Activated T-helper 2 cell treated with anti-CD3 and anti-CD28 coated beads, Interferon-gamma antibody, Interleukin-2, Interleukin-4, amounts not matched to agents 10 μg/mL and 5 μg/mL and 100 μg/mL, durations not matched to agents 14 hours and 24 hours and 36 hours (primary cell): ENCODE measurements at regions of chr5 and their contacts with region 1.

Region 1: GRCh38 chr5:59799668-59800346 is 93.7 kb downstream of the PDE4D start:
- DNase-seq: no peak
- H3K4me3 Mint-ChIP-seq: no peak overlapping the region
- H3K27ac Mint-ChIP-seq: no peak overlapping the region
- H3K4me1 Mint-ChIP-seq: peaks cover 4% of the 10 kb centered on the region
- H3K27me3 Mint-ChIP-seq: peaks cover 10% of the 10 kb centered on the region

Region 2: GRCh38 chr5:59390074-59390659 is 409.6 kb before region 1 on chr5:
- intact Hi-C with region 1: loop called (anchors 1 kb)
- DNase-seq: no peak
- H3K4me3 Mint-ChIP-seq: no peak overlapping the region
- H3K27ac Mint-ChIP-seq: no peak overlapping the region
- H3K4me1 Mint-ChIP-seq: no peaks in the 10 kb centered on the region
- H3K27me3 Mint-ChIP-seq: peaks cover 15% of the 10 kb centered on the region

Region 3: GRCh38 chr5:59483971-59484472 is 315.8 kb before region 1 on chr5:
- intact Hi-C with region 1: loop called (anchors 5 kb)
- DNase-seq: no peak
- H3K4me3 Mint-ChIP-seq: peak overlapping the region; percentile 13
- H3K27ac Mint-ChIP-seq: peak overlapping the region; percentile 79
- H3K4me1 Mint-ChIP-seq: peaks cover 20% of the 10 kb centered on the region
- H3K27me3 Mint-ChIP-seq: peaks cover 4% of the 10 kb centered on the region

Region 4: DNA sequence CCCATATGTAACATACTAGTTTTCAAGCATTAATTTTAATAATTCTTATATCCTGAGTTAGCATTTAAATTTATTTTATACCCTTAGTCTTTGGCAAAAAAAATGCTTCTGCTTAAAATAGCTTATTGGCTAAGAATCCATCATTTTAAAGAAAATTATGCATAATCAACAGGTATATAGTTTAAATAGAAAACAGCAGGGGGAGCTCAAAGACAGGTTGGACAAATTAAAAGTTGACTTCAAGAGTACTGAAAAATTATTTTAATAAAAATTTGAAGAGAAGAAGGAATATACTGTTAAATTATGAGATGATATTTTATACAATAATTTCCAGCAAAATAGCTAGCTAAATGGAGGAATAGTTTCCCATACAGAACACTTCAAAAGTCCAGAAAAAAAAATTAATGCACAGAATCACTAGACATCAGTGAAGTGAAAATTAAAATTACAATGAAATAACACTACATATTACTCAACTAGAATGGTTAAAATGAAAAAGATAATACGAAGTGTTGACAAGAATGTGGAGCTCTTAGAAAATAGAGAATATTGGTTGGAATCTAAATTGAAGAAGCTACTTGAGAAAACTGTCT is 293.4 kb before region 1 on chr5:
- intact Hi-C with region 1: loop called (anchors 1 kb)
- DNase-seq: no peak
- H3K4me3 Mint-ChIP-seq: no peak overlapping the region
- H3K27ac Mint-ChIP-seq: no peak overlapping the region
- H3K4me1 Mint-ChIP-seq: no peaks in the 10 kb centered on the region
- H3K27me3 Mint-ChIP-seq: peaks cover 5% of the 10 kb centered on the region

Region 5: DNA sequence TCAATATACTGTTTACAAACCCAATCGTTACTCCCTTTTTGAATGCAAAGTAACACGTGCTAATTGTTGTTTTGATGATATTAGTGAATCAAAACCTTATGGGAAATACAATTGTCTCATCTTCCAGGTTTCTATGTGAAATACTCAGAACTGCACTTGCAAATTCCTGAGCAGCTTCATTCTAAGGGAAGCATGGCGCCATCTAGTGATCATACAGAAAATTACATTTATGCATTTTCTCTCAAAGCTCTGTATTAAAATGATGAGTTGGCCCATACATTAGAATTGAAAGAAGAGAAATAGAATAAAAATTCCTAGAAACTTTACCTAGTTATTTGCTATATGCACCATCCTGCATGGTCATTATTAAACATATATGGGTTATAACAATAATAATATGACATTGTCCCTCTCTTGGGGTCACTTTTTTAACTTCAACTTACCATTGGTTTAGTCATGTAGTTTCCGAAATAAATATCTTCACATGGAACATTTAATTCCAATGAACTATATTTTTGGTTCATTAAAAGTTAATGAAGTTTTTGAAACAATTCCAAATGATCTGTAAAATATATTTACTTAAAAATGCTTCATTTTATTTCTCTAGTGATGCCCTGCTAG is 126.3 kb before region 1 on chr5:
- intact Hi-C with region 1: loop called (anchors 5 kb)
- DNase-seq: no peak
- H3K4me3 Mint-ChIP-seq: no peak overlapping the region
- H3K27ac Mint-ChIP-seq: no peak overlapping the region
- H3K4me1 Mint-ChIP-seq: no peaks in the 10 kb centered on the region
- H3K27me3 Mint-ChIP-seq: peaks cover 4% of the 10 kb centered on the region

Region 6: GRCh38 chr5:59724482-59725391 is 75.1 kb before region 1 on chr5:
- intact Hi-C with region 1: loop called (anchors 2 kb)
- DNase-seq: no peak
- H3K4me3 Mint-ChIP-seq: no peak overlapping the region
- H3K27ac Mint-ChIP-seq: no peak overlapping the region
- H3K4me1 Mint-ChIP-seq: no peaks in the 10 kb centered on the region
- H3K27me3 Mint-ChIP-seq: peaks cover 1% of the 10 kb centered on the region

Region 7: GRCh38 chr5:59760798-59761348 is 38.9 kb before region 1 on chr5:
- intact Hi-C with region 1: loop called (anchors 2 kb)
- DNase-seq: no peak
- H3K4me3 Mint-ChIP-seq: no peak overlapping the region
- H3K27ac Mint-ChIP-seq: peak overlapping the region; percentile 46
- H3K4me1 Mint-ChIP-seq: peaks cover 20% of the 10 kb centered on the region
- H3K27me3 Mint-ChIP-seq: peaks cover 8% of the 10 kb centered on the region

Region 8: DNA sequence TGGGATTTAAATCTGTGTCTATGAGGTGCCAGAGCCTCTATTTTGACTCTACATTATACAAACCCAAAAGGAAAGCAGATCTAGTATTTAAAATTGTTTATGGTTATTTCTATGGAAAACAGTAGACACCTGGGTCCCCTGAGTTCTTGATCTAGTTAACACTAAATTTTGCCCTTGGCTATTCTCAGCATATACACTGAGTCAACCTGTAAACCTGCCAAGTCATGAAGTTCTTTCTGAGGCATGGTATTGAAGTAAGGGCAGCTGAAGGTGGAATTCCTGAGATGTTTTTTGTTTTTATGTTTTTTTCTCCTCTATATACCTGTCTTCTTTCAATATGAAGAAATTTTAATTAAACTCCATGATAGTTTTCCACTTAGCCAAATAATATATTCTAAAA is 26.5 kb before region 1 on chr5:
- intact Hi-C with region 1: no loop called
- DNase-seq: no peak
- H3K4me3 Mint-ChIP-seq: no peak overlapping the region
- H3K27ac Mint-ChIP-seq: no peak overlapping the region
- H3K4me1 Mint-ChIP-seq: peaks cover 28% of the 10 kb centered on the region
- H3K27me3 Mint-ChIP-seq: peaks cover 24% of the 10 kb centered on the region